ENCODE measurements at regions of chr2 and their contacts with region 1.

Region 1: GRCh38 chr2:33153008-33153407 is 206.3 kb downstream of the LTBP1 start:
- DNase-seq: no peak
- H3K4me3 ChIP-seq: no peak overlapping the region
- H3K27me3 ChIP-seq: no peaks in the 10 kb centered on the region
- CTCF ChIP-seq: no peak

Region 2: DNA sequence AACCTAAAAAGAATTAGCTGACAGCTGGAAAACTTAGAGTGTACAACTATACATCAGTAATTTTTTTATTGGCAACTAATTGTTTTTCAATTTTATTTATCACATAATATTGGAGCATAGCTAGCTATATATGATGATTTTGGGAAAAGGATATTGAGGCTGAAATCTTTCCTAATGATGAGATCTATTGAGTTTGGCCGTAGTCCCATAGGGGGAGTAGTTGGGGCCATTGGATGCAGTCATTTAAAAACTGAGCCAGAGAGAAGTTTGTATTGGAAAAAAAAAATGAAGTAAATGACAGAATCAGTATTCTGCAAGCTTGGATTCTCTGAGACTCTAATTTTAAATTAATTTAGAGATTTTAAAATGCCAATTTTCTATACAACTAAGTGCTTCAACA is 26.5 kb before region 1 on chr2:
- CTCF ChIA-PET with region 1: no interaction called
- POLR2A ChIA-PET with region 1: no interaction called
- DNase-seq: no peak
- H3K4me3 ChIP-seq: no peak overlapping the region
- H3K27me3 ChIP-seq: no peaks in the 10 kb centered on the region
- CTCF ChIP-seq: no peak

Region 3: DNA sequence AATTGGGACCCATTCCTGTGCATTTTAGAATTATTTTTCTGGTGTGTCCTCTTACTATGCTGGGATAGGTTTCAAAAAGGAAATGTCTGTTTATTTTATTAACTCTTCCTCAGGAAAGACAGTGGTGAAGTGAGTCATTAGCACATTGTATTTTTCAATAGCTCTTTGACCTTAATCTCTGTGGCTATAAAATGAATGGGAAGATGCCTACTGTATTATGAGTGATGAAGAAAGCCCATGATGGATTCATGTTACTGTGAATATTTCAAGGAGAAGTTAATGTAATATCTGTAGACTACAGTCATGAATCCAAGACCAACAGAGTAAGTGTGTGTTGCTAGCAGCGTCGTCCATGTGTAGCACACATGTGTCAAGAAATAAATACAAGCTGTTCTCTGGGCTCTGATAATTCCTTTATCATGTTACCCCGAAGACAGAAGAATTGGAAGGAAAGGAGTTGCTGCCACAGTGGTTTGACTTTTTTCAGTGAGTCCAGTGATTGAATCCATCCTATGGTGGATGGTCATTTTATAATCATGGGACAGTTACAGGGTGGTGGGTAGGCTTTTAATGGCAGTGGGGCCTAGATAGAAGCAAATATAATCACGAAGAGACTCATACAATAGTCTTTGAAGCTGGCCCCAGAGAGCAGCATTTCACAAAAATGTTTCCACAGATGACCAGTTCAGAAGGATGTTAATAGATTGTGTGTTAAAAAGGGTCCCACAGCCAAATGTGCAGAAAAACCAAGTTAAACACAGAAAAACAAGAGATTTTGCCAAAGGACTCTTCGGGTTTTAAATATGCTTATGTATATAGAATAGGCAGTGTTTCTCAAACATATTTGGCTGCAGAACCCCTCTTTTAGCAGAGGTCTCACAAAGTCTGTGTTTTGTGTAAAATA is 83.7 kb after region 1 on chr2:
- CTCF ChIA-PET with region 1: no interaction called
- POLR2A ChIA-PET with region 1: interaction called, 11 read pairs
- DNase-seq: no peak
- H3K4me3 ChIP-seq: no peak overlapping the region
- H3K27me3 ChIP-seq: no peaks in the 10 kb centered on the region
- CTCF ChIP-seq: no peak

Region 4: GRCh38 chr2:33602201-33602830 is 449.3 kb after region 1 on chr2:
- CTCF ChIA-PET with region 1: no interaction called
- POLR2A ChIA-PET with region 1: no interaction called
- DNase-seq: no peak
- H3K4me3 ChIP-seq: no peak overlapping the region
- H3K27me3 ChIP-seq: no peaks in the 10 kb centered on the region
- CTCF ChIP-seq: no peak

Measured in BJ (cell line).